ENCODE measurements at regions of chr10 and their contacts with region 1.

Region 1: DNA sequence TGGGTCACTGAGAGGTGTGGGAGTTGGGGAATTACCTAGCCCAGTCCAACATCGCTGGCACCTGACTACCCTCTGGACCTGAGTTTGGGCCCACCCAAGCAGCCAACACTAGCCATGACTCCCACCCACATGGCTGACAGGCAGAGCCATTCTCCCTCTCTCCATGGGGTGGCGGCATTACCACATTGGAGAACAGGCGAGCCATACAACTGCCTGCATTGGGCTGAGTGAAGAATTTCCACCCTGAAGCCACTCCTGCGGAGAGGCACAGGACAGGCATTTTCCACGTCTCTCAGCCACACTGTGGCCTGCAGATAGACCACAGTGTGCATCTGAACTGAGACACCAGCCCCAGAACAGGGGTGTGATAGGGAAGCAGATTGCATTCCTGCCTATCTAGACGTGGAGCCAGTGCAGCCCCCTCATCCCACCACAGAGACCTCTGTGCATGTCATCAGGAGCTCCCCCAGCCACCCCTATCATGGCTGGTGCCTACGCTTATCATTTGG is 58.2 kb upstream of the ANTXRL start:
- DNase-seq: peak; percentile 77
- ATAC-seq: peak; percentile 98

Region 2: GRCh38 chr10:46325023-46325422 is 96.4 kb after region 1 on chr10:
- intact Hi-C with region 1: loop called (anchors 10 kb)
- DNase-seq: no peak
- ATAC-seq: peak; percentile 60